ENCODE measurements at regions of chr6 and their contacts with region 1.

Region 1: DNA sequence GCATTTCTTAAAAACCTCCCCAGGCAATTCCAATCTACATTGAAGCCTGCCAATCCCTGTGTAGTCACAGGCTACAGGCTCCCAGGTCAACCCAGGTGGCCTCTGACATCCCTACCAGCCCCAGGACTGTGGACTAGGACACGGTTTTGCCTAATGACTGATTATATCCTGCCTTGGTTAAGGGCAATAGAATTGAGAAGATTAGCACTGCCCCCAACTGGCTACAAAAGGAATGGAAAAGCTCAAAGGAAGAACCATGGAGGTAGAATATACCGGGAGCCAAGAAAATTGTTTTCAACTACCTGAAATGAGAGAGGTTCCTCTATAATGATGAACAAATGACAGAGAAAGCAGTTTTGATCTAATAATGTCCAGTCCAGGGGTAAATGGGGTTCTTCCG is 421.1 kb upstream of the AGPAT4 start:
- DNase-seq: no peak
- ATAC-seq: peak; percentile 44 to 58

Region 2: GRCh38 chr6:161393839-161394364 is 301.1 kb before region 1 on chr6:
- intact Hi-C with region 1: loop called in 1 of 2 experiments (anchors 5 kb)
- DNase-seq: no peak
- ATAC-seq: peak; percentile 91 to 96

Region 3: GRCh38 chr6:161418463-161418945 is 276.5 kb before region 1 on chr6:
- intact Hi-C with region 1: loop called (anchors 5 to 10 kb)
- DNase-seq: no peak
- ATAC-seq: peak; percentile 63 to 75

Measured in left cardiac atrium (tissue), 4 donors.